Gastrocnemius medialis (tissue), 4 donors: ENCODE measurements at regions of chr4 and their contacts with region 1.

Region 1: DNA sequence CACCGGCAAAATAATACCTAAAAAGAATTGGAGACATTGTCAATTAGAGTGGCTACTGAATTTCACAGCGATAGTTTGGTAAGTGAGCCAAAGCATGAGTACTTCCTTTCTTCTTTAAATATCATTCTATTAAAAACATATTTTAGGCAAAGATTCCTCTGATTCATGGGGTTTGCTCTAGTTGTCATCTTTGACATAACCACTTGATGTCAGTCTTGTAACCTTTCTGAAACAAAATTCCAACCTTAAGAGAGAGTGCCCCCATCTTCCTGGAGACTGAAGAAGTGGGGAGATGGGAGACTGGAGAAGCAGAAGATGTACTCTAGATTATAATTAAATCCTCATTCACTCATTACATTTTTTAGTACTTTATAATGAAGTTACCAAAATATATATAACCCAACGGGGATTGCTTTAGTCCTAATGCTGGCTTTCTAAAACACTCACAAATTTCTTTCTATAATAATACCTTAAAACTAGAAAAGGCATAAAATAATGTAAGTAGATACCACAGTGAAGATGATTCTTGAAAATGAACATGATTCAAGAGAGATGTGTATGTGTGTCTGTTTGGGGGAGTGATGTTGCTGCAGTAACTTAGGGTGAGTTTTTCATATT is 96.4 kb downstream of the EMCN start:
- DNase-seq: no peak
- ATAC-seq: peak; percentile 75 to 76
- H3K4me3 ChIP-seq: peak overlapping the region; percentile 20 to 59 (median 42)
- H3K27ac ChIP-seq: peak overlapping the region; percentile 38 to 84 (median 75)
- H3K4me1 ChIP-seq: peaks cover 9 to 39% of the 10 kb centered on the region in 2 donors
- H3K27me3 ChIP-seq: no peaks in the 10 kb centered on the region
- CTCF ChIP-seq: peak; percentile 28 to 68 (median 62)
- POLR2A ChIP-seq: no peak

Region 2: DNA sequence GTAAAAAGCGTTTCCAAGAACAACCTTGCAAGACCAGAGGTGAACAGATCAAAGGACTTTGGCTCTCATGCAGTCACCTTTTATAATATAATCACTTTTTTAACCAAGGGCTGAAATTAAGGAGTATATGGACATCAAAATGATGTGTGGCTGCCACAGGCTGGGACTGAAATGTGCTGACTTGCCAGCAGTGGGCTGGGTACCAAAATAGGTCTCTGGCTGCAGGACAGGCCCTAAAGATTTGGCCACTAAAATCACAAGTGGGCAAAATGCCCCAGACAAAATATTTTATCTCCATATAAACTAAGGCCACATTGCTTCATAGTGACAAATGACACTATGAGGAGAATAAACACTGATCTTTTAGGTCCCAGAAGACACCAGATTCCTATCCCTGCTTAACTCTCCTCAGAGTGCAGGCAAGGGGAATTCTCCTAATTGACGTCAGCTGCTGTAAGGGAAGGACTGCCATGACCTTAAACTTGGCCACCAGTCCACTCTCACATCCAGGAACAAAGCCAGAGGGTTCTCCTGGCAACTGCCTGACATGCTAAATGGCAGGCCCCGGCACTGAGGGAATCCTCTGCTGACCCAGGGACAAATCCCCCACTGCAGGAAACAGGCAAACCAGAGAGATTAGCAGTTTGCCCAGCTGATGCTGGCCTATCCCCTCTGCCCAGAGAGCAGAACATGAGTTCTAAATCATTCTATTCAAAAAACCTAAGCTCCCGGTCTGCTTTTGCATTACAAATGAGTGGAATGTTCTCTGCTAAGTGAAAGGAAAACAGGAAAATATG is 770.0 kb after region 1 on chr4:
- in situ Hi-C with region 1: loop called in 1 of 4 experiments (anchors 25 kb)
- intact Hi-C with region 1: no loop called
- DNase-seq: peak; percentile 60 to 83
- ATAC-seq: peak; percentile 97 to 99
- H3K4me3 ChIP-seq: no peak overlapping the region
- H3K27ac ChIP-seq: peak overlapping the region; percentile 65 to 78 (median 70)
- H3K4me1 ChIP-seq: peaks cover 53 to 55% of the 10 kb centered on the region in 2 donors
- H3K27me3 ChIP-seq: no peaks in the 10 kb centered on the region
- CTCF ChIP-seq: no peak
- POLR2A ChIP-seq: no peak